ENCODE measurements at regions of chr7 and their contacts with region 1.

Region 1: DNA sequence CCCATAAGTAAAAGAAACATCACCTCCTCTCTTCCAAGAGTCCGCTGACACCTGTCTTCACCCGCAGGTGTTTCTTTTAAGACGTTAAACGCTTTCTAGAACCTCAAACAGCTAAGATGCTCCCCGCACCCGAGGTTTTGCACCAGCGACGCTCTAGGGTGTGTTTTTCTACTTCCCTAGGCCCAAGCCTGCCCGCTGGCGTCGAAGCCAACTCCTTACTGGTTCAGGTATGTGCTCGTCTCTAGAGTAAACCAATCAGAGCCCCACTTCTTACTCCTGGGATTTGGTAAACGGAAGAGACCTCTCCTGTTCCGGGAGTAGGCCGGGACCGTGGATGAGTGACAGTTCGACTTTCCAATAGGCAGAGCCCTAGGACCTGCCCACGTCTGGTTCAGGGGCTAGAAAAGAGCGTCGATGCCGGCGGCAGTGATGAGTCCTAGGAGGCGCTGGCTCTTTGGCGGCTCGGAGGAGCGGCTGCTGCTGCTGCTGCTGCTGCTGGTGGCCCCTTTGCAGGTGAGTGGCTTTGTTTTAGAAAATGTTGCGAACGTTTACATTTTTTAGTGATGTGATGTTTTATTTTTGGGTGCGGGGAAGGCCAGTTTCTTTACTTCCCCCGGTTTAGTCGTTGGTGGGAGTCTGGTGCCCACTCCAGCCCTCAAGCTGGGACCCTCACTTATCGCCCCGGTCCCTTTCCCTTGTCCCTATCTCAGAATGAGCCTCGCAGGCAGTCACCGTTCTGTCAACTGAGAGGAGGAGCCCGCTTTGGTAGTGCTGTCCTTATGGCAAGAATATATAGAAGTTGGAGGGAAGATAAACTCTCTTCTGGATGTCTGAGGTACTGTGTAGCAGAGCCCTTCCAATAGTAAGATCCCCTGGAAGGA is at the start of gene BPGM:
- DNase-seq: peak; percentile 98
- ATAC-seq: peak; percentile 99
- H3K4me3 Mint-ChIP-seq: no peak within 1 kb of the TSS
- H3K27ac Mint-ChIP-seq: no peak within 1 kb of the TSS
- H3K4me1 Mint-ChIP-seq: peaks cover 35% of the 10 kb centered on the region
- H3K27me3 Mint-ChIP-seq: no peaks in the 10 kb centered on the region
- total RNA-seq, gene BPGM: 18.6 to 19.7 TPM

Region 2: GRCh38 chr7:134657526-134657925 is 10.9 kb after region 1 on chr7:
- CTCF ChIA-PET with region 1: interaction called, 17 read pairs
- DNase-seq: no peak
- ATAC-seq: no peak
- H3K4me3 Mint-ChIP-seq: no peak overlapping the region
- H3K27ac Mint-ChIP-seq: no peak overlapping the region
- H3K4me1 Mint-ChIP-seq: peaks cover 43% of the 10 kb centered on the region
- H3K27me3 Mint-ChIP-seq: no peaks in the 10 kb centered on the region

Measured in activated CD8-positive, alpha-beta memory T cell treated with anti-CD3 and anti-CD28 coated beads, Interleukin-2, amount 10 ng/mL, durations not matched to agents 7 days and 5 days (primary cell).